Activated naive CD4-positive, alpha-beta T cell treated with anti-CD3 and anti-CD28 coated beads for 36 hours (primary cell): ENCODE measurements at regions of chr1 and their contacts with region 1.

Region 1: GRCh38 chr1:226940029-226940805 is at the start of gene COQ8A:
- DNase-seq: peak; percentile 99
- H3K4me3 Mint-ChIP-seq: peak within 1 kb of the TSS; percentile 82
- H3K27ac Mint-ChIP-seq: peak within 1 kb of the TSS; percentile 90
- H3K4me1 Mint-ChIP-seq: peaks cover 48% of the 10 kb centered on the region
- H3K27me3 Mint-ChIP-seq: no peaks in the 10 kb centered on the region
- total RNA-seq, gene COQ8A: 24.8 to 26.5 TPM

Region 2: DNA sequence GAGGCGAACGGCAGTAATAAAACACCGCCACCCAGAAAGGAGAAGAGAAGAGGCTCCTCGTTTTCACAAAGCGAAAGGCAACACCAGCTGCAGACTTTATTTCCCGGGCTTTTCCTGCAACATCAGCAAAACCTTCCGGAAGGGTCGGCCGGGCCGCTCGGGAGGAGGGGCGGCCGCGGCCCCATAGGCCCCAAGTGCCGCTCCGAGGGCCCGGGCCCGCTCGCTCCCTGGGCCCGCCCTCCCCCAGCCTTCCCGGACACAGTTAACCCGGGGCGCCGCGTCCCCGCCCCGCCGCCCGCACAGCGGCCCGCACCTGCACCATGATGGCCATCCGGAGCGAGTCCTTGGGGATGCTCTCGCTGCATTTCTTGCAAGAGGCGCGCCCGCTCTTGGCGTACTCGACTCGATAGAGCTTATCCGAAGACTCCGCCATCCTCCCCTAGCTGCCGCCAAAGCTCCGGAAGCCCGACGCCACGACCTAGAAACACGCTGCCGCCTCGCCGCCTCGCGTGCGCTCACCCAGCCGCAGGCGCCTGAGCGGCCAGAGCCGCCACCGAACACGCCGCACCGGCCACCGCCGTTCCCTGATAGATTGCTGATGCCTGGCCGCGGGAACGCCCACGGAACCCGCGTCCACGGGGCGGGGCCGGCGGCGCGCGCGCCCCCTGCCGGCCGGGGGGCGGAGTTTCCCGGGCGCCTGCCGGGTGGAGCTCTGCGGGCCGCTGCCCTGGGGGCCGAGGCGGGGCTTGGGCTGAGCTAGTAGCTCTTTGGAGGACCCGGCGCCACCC is 532.5 kb before region 1 on chr1 and contains the start of gene PARP1:
- CTCF ChIA-PET with region 1: no interaction called
- intact Hi-C with region 1: loop called (anchors 1 kb)
- DNase-seq: peak; percentile 87
- H3K4me3 Mint-ChIP-seq: peak within 1 kb of the TSS; percentile 99
- H3K27ac Mint-ChIP-seq: peak within 1 kb of the TSS; percentile 98
- H3K4me1 Mint-ChIP-seq: peaks cover 39% of the 10 kb centered on the region
- H3K27me3 Mint-ChIP-seq: no peaks in the 10 kb centered on the region
- total RNA-seq, gene PARP1: 265 to 273 TPM

Region 3: GRCh38 chr1:226882631-226883409 is 57.4 kb before region 1 on chr1:
- CTCF ChIA-PET with region 1: interaction called, 3 read pairs
- intact Hi-C with region 1: loop called (anchors 1 kb)
- DNase-seq: peak; percentile 57
- H3K4me3 Mint-ChIP-seq: peak overlapping the region; percentile 74
- H3K27ac Mint-ChIP-seq: peak overlapping the region; percentile 93
- H3K4me1 Mint-ChIP-seq: peaks cover 51% of the 10 kb centered on the region
- H3K27me3 Mint-ChIP-seq: no peaks in the 10 kb centered on the region

Region 4: GRCh38 chr1:226951286-226952117 is 11.3 kb after region 1 on chr1:
- CTCF ChIA-PET with region 1: no interaction called
- intact Hi-C with region 1: no loop called
- DNase-seq: no peak
- H3K4me3 Mint-ChIP-seq: no peak overlapping the region
- H3K27ac Mint-ChIP-seq: no peak overlapping the region
- H3K4me1 Mint-ChIP-seq: peaks cover 6% of the 10 kb centered on the region
- H3K27me3 Mint-ChIP-seq: no peaks in the 10 kb centered on the region

Region 5: GRCh38 chr1:227315629-227316346 is 375.6 kb after region 1 on chr1:
- CTCF ChIA-PET with region 1: no interaction called
- intact Hi-C with region 1: loop called (anchors 1 kb)
- DNase-seq: no peak
- H3K4me3 Mint-ChIP-seq: peak overlapping the region; percentile 38
- H3K27ac Mint-ChIP-seq: no peak overlapping the region
- H3K4me1 Mint-ChIP-seq: peaks cover 8% of the 10 kb centered on the region
- H3K27me3 Mint-ChIP-seq: peaks cover 42% of the 10 kb centered on the region

Region 6: DNA sequence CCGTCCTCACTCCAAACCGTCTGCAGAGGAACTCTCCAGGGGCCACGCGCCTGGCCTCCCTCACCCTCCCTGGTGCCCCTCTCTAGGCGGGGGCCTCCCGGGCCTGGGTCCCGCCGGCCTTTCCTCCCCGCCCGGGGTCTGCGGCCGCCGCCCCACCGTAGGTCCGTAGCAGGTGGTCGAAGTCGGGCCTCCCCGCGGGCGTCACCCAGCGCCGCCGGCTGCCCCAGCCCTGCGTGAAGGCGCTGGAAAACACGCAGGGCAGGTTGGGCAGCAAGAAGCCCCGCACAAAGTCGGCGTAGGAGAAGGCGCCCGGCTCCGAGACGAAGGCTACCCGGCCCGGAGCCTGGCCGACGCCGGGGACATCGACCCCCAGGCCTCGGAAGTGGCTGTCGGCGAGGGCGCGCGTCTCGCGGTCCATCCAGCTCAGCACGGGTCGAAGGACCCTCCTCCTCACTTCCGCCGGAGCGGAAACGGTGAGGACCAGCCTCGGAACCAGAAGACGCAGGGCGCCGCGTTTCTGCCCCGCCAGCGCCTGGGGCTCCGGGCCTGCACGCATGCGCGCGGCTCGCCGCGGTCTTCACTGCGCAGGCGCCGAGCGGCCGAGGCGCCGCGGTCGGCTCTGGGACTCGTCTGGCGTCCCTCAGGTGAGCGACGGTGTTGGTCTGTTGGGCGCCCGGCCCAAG is 794.8 kb after region 1 on chr1 and contains the starts of genes JMJD4 and SNAP47:
- CTCF ChIA-PET with region 1: no interaction called
- intact Hi-C with region 1: loop called (anchors 1 kb)
- DNase-seq: peak; percentile 93
- H3K4me3 Mint-ChIP-seq: peak within 1 kb of the TSS; percentile 92
- H3K27ac Mint-ChIP-seq: peak within 1 kb of the TSS; percentile 76
- H3K4me1 Mint-ChIP-seq: peaks cover 40% of the 10 kb centered on the region
- H3K27me3 Mint-ChIP-seq: no peaks in the 10 kb centered on the region
- total RNA-seq, gene JMJD4: 11.3 to 11.7 TPM
- total RNA-seq, gene SNAP47: 18.7 to 23.0 TPM